ENCODE measurements at regions of chr5 and their contacts with region 1.

Region 1: DNA sequence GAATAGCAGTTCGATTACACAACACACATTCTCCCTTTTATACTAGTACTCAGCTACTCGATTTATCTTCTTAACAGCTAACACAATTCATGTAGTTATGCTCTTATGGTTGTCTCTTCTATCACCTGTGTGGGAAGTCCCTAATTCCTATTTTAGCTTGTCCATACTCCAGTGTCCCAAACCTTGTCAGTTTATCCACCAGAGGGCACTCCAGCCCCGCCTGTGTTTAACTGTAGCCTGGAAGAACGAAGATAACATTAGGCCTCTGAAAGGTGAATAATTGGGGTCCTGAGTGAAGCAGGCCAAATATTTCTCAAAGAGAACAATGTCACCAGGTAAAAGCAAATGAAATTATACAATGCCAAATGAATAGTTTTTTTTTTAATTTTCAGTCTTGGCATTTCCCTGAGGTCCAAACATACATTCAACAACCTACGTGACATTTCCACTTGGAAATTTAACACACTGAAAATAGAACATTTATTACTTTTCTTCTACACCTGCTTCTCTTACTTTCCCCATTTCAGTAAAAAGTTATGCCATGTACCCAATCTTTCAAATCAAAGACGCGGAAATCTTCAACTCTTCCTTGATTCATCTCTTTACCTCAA is 560.7 kb downstream of the HTR1A start:
- DNase-seq: peak; percentile 27
- H3K4me3 ChIP-seq: no peak overlapping the region; a peak in 1 of 4 replicates
- H3K27ac ChIP-seq: no peak overlapping the region
- H3K4me1 ChIP-seq: no peaks in the 10 kb centered on the region; a peak in 1 of 4 replicates
- H3K27me3 ChIP-seq: no peaks in the 10 kb centered on the region
- CTCF ChIP-seq: peak; percentile 93
- EP300 ChIP-seq: no peak
- RAD21 ChIP-seq: peak; percentile 84

Region 2: DNA sequence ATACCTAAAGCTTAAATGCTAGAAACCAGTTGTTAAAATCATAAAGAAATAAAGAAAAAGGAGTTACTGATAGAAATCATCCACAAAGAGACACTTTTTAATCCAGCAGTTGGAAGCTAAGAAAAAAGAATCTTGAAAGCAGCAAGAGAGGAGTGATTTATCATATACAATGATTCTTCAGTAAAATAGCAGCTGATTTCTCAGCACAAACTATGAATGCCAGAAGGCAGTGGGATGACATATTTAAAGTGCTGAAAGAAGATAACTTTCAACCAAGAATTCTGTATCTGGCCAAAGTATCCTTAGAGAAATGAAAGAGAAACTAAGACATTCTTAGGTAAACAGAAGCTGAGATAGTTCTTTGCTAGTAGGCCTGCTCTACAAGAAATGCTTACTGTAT is 194.7 kb after region 1 on chr5:
- CTCF ChIA-PET with region 1: no interaction called
- POLR2A ChIA-PET with region 1: no interaction called
- DNase-seq: no peak
- H3K4me3 ChIP-seq: no peak overlapping the region
- H3K27ac ChIP-seq: no peak overlapping the region
- H3K4me1 ChIP-seq: no peaks in the 10 kb centered on the region
- H3K27me3 ChIP-seq: no peaks in the 10 kb centered on the region
- CTCF ChIP-seq: no peak
- EP300 ChIP-seq: no peak
- RAD21 ChIP-seq: no peak

Region 3: DNA sequence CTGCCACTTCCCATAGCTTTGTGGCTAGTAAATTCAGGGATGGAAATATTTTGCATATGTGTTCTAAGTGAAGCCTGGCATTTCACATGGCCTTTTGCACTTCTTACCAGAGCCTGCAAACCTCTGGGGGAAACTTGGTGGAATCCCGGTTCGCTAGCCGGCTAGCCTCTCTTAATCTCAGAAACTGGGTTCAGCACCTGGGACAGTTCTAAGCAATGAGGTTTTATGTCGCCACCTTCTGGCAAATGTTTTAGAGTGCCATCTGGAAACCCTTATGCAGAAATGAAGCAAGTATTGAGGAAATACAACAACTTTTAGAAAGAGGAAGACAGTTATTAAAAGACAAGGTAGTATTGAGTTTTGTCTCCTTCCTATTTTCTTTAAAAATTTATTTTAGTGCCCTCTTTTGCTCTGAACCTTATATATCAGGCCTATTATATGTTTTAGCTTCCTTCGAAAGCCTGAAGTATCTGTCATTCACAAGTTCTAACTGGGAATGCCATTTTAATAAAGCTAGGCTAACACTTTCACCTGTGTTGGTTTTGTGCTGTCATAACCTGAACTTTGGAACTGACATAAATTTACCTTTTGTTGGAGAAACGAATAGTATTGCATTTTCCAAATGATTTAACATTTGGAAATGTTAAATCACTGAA is 561.7 kb after region 1 on chr5:
- CTCF ChIA-PET with region 1: interaction called, 43 read pairs
- POLR2A ChIA-PET with region 1: no interaction called
- DNase-seq: peak; percentile 46
- H3K4me3 ChIP-seq: no peak overlapping the region; a peak in 1 of 4 replicates
- H3K27ac ChIP-seq: no peak overlapping the region
- H3K4me1 ChIP-seq: no peaks in the 10 kb centered on the region
- H3K27me3 ChIP-seq: peaks cover 27% of the 10 kb centered on the region; the same call in 1 of the 2 replicates
- CTCF ChIP-seq: peak; percentile 84
- EP300 ChIP-seq: no peak
- RAD21 ChIP-seq: peak; percentile 68